Calu3 (cell line): ENCODE measurements at regions of chr5 and their contacts with region 1.

Region 1: GRCh38 chr5:63837437-63837836 is 124.8 kb downstream of the HTR1A start:
- DNase-seq: no peak
- H3K4me3 Mint-ChIP-seq: no peak overlapping the region
- H3K27ac Mint-ChIP-seq: no peak overlapping the region
- H3K4me1 Mint-ChIP-seq: no peaks in the 10 kb centered on the region
- H3K27me3 Mint-ChIP-seq: no peaks in the 10 kb centered on the region
- CTCF ChIP-seq: no peak

Region 2: GRCh38 chr5:63916786-63917185 is 79.3 kb after region 1 on chr5:
- CTCF ChIA-PET with region 1: no interaction called
- intact Hi-C with region 1: no loop called
- DNase-seq: no peak
- H3K4me3 Mint-ChIP-seq: no peak overlapping the region
- H3K27ac Mint-ChIP-seq: no peak overlapping the region
- H3K4me1 Mint-ChIP-seq: no peaks in the 10 kb centered on the region
- H3K27me3 Mint-ChIP-seq: no peaks in the 10 kb centered on the region
- CTCF ChIP-seq: no peak

Region 3: GRCh38 chr5:63981864-63982263 is 144.4 kb after region 1 on chr5:
- CTCF ChIA-PET with region 1: no interaction called
- intact Hi-C with region 1: no loop called
- DNase-seq: no peak
- H3K4me3 Mint-ChIP-seq: no peak overlapping the region
- H3K27ac Mint-ChIP-seq: no peak overlapping the region
- H3K4me1 Mint-ChIP-seq: no peaks in the 10 kb centered on the region
- H3K27me3 Mint-ChIP-seq: no peaks in the 10 kb centered on the region
- CTCF ChIP-seq: no peak

Region 4: GRCh38 chr5:64125521-64125920 is 288.1 kb after region 1 on chr5:
- CTCF ChIA-PET with region 1: no interaction called
- intact Hi-C with region 1: loop called (anchors 5 kb)
- DNase-seq: no peak
- H3K4me3 Mint-ChIP-seq: no peak overlapping the region
- H3K27ac Mint-ChIP-seq: no peak overlapping the region
- H3K4me1 Mint-ChIP-seq: no peaks in the 10 kb centered on the region
- H3K27me3 Mint-ChIP-seq: peaks cover 8% of the 10 kb centered on the region
- CTCF ChIP-seq: no peak